GM12878 (cell line): ENCODE measurements at regions of chr1 and their contacts with region 1.

Region 1: GRCh38 chr1:228131766-228132165 is 8.3 kb upstream of the GUK1 start:
- DNase-seq: no peak
- ATAC-seq: no peak
- H3K4me3 ChIP-seq: no peak overlapping the region
- H3K27ac ChIP-seq: no peak overlapping the region
- H3K4me1 ChIP-seq: no peaks in the 10 kb centered on the region
- H3K27me3 ChIP-seq: no peaks in the 10 kb centered on the region; a peak in 2 of 4 replicates
- CTCF ChIP-seq: no peak
- EP300 ChIP-seq: no peak
- POLR2A ChIP-seq: no peak
- RAD21 ChIP-seq: no peak

Region 2: GRCh38 chr1:228050571-228051231 is 81.1 kb before region 1 on chr1:
- CTCF ChIA-PET with region 1: no interaction called
- POLR2A ChIA-PET with region 1: no interaction called
- RAD21 ChIA-PET with region 1: no interaction called
- SMC1A ChIA-PET with region 1: no interaction called
- in situ Hi-C with region 1: no loop called
- intact Hi-C with region 1: no loop called
- DNase-seq: no peak
- ATAC-seq: no peak
- H3K4me3 ChIP-seq: no peak overlapping the region
- H3K27ac ChIP-seq: no peak overlapping the region
- H3K4me1 ChIP-seq: no peaks in the 10 kb centered on the region
- H3K27me3 ChIP-seq: peaks cover 0 to 3% of the 10 kb centered on the region in 2 experiments; a peak in 1 of 4 replicates
- CTCF ChIP-seq: no peak
- EP300 ChIP-seq: no peak
- POLR2A ChIP-seq: no peak
- RAD21 ChIP-seq: no peak

Region 3: DNA sequence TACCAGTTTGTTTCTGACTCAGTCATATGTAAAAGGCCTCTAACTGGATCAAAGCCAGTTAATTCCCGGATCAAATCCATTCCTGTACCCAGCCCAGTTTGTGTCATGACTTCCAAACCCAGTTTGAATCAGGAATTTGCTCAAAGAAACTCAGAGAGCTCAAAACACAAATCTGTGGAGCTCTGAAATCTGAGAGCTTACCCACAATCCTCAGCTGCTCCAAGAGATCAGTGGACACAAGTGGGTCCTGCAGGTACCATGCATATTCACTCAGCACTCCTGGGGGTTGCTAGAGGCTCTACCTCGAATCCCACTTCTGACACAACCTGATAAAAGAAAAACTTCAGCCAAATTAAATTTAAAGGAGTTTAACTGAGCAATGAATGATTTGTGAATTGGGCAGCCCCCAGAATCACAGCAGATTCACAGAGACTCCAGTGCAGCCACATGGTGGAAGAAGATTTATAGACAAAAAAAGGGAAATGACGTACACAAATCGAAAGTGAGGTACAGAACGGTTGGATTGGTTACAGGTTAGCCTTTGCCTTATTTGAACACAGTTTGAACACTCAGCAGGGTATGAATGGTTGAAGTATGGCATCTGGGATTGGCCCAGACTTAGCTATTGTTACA is 10.8 kb before region 1 on chr1:
- CTCF ChIA-PET with region 1: interaction called, 13 read pairs
- POLR2A ChIA-PET with region 1: interaction called, 4 read pairs
- RAD21 ChIA-PET with region 1: no interaction called
- SMC1A ChIA-PET with region 1: interaction called, 3 read pairs
- in situ Hi-C with region 1: no loop called
- intact Hi-C with region 1: no loop called
- DNase-seq: no peak
- ATAC-seq: peak; percentile 62
- H3K4me3 ChIP-seq: no peak overlapping the region
- H3K27ac ChIP-seq: no peak overlapping the region
- H3K4me1 ChIP-seq: no peaks in the 10 kb centered on the region
- H3K27me3 ChIP-seq: no peaks in the 10 kb centered on the region
- CTCF ChIP-seq: no peak
- EP300 ChIP-seq: no peak
- POLR2A ChIP-seq: no peak
- RAD21 ChIP-seq: no peak

Region 4: DNA sequence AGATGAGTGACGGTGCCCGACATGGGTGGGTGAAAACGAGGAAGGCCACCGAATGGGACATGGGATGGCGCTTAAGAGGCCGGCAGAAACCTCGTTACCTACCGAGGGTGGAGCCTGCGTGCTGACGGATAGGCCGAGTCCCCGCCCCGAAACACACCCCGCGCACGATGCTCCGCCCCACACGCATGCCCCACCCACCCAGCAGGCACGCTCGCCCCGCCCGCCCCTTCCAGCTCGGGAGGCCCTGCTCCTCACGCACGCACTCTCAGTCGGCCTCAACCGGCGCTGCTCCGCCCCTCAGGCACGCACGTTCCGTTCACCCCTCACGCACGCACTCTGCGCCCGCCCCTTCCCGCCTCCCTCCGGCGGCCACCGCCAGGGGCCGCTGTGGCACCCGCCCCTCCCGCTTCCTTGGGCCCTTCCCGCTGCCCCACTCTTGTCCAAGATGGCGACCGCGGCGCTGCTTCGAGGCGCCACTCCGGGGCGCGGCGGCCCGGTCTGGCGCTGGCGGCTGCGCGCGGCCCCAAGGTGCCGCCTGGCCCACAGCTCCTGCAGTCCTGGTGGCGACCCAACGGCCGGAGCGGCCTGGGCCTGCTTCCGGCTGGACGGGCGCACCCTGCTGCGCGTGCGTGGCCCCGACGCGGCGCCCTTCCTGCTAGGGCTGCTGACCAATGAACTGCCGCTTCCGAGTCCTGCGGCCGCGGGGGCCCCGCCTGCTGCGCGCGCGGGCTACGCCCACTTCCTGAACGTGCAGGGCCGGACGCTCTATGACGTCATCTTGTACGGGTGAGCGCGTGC is 33.8 kb after region 1 on chr1 and contains the start of gene IBA57:
- CTCF ChIA-PET with region 1: interaction called, 63 read pairs
- POLR2A ChIA-PET with region 1: interaction called, 11 read pairs
- RAD21 ChIA-PET with region 1: interaction called, 27 read pairs
- SMC1A ChIA-PET with region 1: interaction called, 32 read pairs
- in situ Hi-C with region 1: loop called (anchors 5 kb)
- intact Hi-C with region 1: no loop called
- DNase-seq: peak; percentile 93
- ATAC-seq: peak; percentile 90
- H3K4me3 ChIP-seq: peak within 1 kb of the TSS; percentile 95
- H3K27ac ChIP-seq: peak within 1 kb of the TSS; percentile 99
- H3K4me1 ChIP-seq: peaks cover 7% of the 10 kb centered on the region
- H3K27me3 ChIP-seq: no peaks in the 10 kb centered on the region
- CTCF ChIP-seq: peak; percentile 88 to 98 (median 92)
- EP300 ChIP-seq: peak; percentile 8 to 60; a peak in 2 of 4 replicates
- POLR2A ChIP-seq: peak; percentile 95
- RAD21 ChIP-seq: 0 out of 2 replicates have a peak, but pooled peaks have one; percentile 14
- polyA plus RNA-seq, gene IBA57: 0.51 to 0.60 TPM

Region 5: GRCh38 chr1:228185641-228185965 is 53.8 kb after region 1 on chr1:
- CTCF ChIA-PET with region 1: no interaction called
- POLR2A ChIA-PET with region 1: no interaction called
- RAD21 ChIA-PET with region 1: no interaction called
- SMC1A ChIA-PET with region 1: no interaction called
- in situ Hi-C with region 1: no loop called
- intact Hi-C with region 1: no loop called
- DNase-seq: no peak
- ATAC-seq: no peak
- H3K4me3 ChIP-seq: no peak overlapping the region
- H3K27ac ChIP-seq: no peak overlapping the region
- H3K4me1 ChIP-seq: no peaks in the 10 kb centered on the region
- H3K27me3 ChIP-seq: no peaks in the 10 kb centered on the region
- CTCF ChIP-seq: no peak
- EP300 ChIP-seq: no peak
- POLR2A ChIP-seq: no peak
- RAD21 ChIP-seq: no peak

Region 6: DNA sequence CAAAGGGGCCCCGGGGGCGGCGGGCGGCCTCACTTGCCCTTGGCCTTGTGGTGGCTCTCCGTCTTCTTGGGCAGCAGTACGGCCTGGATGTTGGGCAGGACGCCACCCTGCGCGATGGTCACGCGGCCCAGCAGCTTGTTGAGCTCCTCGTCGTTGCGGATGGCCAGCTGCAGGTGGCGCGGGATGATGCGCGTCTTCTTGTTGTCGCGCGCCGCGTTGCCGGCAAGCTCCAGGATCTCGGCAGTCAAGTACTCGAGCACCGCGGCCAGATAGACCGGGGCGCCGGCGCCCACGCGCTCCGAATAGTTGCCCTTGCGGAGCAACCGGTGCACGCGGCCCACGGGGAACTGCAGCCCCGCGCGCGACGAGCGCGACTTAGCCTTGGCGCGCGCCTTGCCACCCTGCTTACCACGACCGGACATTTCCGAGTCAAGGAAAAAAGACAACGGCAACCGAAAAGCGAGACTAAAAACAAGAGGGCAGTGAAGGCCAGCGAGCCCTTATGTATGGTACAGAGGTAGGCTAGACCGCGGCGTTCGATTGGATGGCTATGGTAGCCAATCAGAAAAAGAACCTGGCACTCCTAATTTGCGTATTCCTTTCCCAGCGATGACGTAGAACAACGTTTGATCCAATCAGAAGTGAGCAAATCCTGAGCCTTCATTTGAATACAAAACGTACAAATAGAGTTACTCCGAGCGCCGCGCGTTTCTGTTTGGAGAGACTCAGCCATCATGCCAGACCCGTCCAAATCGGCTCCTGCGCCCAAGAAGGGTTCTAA is 325.8 kb after region 1 on chr1:
- CTCF ChIA-PET with region 1: interaction called, 3 read pairs
- POLR2A ChIA-PET with region 1: no interaction called
- RAD21 ChIA-PET with region 1: no interaction called
- SMC1A ChIA-PET with region 1: no interaction called
- in situ Hi-C with region 1: no loop called
- intact Hi-C with region 1: loop called (anchors 5 kb)
- DNase-seq: peak; percentile 89
- ATAC-seq: peak; percentile 91
- H3K4me3 ChIP-seq: peak overlapping the region; percentile 64
- H3K27ac ChIP-seq: peak overlapping the region; percentile 66
- H3K4me1 ChIP-seq: no peaks in the 10 kb centered on the region
- H3K27me3 ChIP-seq: no peaks in the 10 kb centered on the region
- CTCF ChIP-seq: no peak; a peak in 1 of 6 replicates
- EP300 ChIP-seq: no peak
- POLR2A ChIP-seq: peak; percentile 93
- RAD21 ChIP-seq: no peak

Region 7: GRCh38 chr1:228500901-228501871 is 369.4 kb after region 1 on chr1:
- CTCF ChIA-PET with region 1: interaction called, 3 read pairs
- POLR2A ChIA-PET with region 1: no interaction called
- RAD21 ChIA-PET with region 1: no interaction called
- SMC1A ChIA-PET with region 1: no interaction called
- in situ Hi-C with region 1: no loop called
- intact Hi-C with region 1: loop called (anchors 5 kb)
- DNase-seq: peak; percentile 78
- ATAC-seq: peak; percentile 98
- H3K4me3 ChIP-seq: no peak overlapping the region
- H3K27ac ChIP-seq: peak overlapping the region; percentile 52
- H3K4me1 ChIP-seq: peaks cover 19% of the 10 kb centered on the region
- H3K27me3 ChIP-seq: no peaks in the 10 kb centered on the region
- CTCF ChIP-seq: peak; percentile 91 to 96 (median 92)
- EP300 ChIP-seq: no peak
- POLR2A ChIP-seq: peak; percentile 3; the same call in 1 of the 2 replicates
- RAD21 ChIP-seq: peak; percentile 77

Region 8: DNA sequence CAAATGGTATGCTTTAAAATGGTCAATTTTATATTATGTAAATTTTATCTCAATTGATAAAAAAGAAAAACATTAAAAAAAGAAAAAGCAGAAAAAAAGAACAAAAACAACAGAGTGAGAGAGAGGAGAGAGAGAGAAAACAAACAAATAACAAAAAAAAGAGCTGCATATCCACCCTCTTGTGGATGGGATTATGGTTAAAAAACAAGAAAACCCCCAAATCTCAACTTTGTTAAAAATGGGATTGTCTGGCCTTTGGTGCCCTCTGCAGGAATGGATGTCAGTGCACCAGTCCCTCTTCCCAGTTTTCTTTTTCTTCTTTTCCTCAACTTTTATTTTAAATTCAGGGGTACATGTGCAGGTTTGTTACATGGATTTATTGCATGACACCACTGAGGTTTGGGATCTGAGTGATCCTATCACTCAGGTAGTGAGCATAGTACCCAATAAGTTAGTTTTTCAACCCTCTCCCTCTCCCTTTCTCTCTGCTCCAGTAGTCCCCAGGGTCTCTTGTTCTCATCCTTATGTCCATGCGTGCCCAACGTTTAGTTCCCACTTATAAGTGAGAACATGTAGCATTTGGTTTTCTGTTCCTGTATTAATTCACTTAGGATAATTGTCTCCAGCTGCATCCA is 383.6 kb after region 1 on chr1:
- CTCF ChIA-PET with region 1: interaction called, 3 read pairs
- POLR2A ChIA-PET with region 1: no interaction called
- RAD21 ChIA-PET with region 1: interaction called, 4 read pairs
- SMC1A ChIA-PET with region 1: interaction called, 4 read pairs
- in situ Hi-C with region 1: no loop called
- intact Hi-C with region 1: loop called (anchors 2 kb)
- DNase-seq: no peak
- ATAC-seq: peak; percentile 51; the same call in 2 of the 3 replicates
- H3K4me3 ChIP-seq: no peak overlapping the region
- H3K27ac ChIP-seq: no peak overlapping the region
- H3K4me1 ChIP-seq: no peaks in the 10 kb centered on the region
- H3K27me3 ChIP-seq: no peaks in the 10 kb centered on the region; a peak in 3 of 4 replicates
- CTCF ChIP-seq: peak; percentile 50 to 69 (median 55); a peak in 4 of 6 replicates
- EP300 ChIP-seq: no peak
- POLR2A ChIP-seq: no peak
- RAD21 ChIP-seq: peak; percentile 77